ENCODE measurements at regions of chrX and their contacts with region 1.

Region 1: GRCh38 chrX:15749642-15750610 is 11.9 kb downstream of the CA5B start:
- DNase-seq: no peak
- ATAC-seq: peak; percentile 81
- H3K4me3 ChIP-seq: no peak overlapping the region
- H3K27ac ChIP-seq: peak overlapping the region; percentile 57; the same call in 1 of the 2 replicates
- H3K4me1 ChIP-seq: peaks cover 5% of the 10 kb centered on the region
- H3K27me3 ChIP-seq: no peaks in the 10 kb centered on the region
- CTCF ChIP-seq: no peak
- EP300 ChIP-seq: no peak
- POLR2A ChIP-seq: 0 out of 2 replicates have a peak, but pooled peaks have one; percentile 39
- RAD21 ChIP-seq: no peak

Region 2: DNA sequence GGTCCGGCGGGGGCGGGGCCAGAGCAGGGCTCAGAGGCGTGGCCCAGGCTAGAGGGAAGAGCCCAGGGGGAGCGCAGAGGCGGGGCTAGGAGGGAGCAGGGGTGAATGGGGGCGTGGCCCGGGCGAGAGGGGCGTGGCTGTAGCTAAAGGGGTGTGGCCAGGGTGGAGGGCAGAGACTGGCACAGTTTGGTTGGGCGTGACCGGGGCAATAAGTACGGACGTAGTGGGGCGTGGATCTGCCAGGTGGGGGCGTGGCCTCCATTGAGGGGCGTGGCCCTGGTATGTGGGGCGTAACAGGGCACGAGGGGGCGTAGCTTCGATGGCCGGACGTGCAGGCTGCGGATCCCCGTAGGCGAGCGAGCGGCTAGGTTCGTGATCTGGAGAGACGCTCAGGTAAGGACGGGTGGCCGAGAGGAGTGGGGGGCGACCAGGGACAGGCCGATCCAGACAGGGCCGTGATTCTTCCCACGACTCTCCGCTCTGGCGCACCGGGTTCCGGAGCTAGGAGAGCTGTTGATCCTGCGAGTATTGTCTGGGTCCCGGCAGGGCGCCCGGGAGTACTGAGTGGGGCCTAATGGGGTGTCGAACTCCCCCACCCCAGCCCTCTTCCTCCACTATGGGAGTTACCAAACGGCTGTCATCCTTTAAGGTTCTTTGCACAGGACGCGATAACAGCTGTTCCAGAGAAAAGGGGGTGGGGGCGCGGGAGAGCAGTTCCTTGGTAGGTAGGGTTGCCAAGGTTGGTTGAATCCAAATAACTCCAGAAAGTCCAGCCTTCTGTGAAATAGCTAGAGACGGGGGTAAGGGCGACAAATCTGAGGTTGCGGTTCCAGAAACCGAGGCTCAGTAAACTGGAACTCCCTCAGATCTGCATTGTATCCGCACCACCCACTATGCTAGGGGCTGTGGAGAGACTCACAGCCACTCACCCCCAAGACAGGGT is 11.7 kb before region 1 on chrX and contains the start of gene CA5B:
- CTCF ChIA-PET with region 1: interaction called, 20 read pairs
- POLR2A ChIA-PET with region 1: no interaction called
- RAD21 ChIA-PET with region 1: no interaction called
- SMC1A ChIA-PET with region 1: interaction called, 10 read pairs
- in situ Hi-C with region 1: no loop called
- intact Hi-C with region 1: no loop called
- DNase-seq: peak; percentile 87
- ATAC-seq: peak; percentile 98
- H3K4me3 ChIP-seq: peak within 1 kb of the TSS; percentile 64
- H3K27ac ChIP-seq: no peak within 1 kb of the TSS
- H3K4me1 ChIP-seq: no peaks in the 10 kb centered on the region
- H3K27me3 ChIP-seq: no peaks in the 10 kb centered on the region
- CTCF ChIP-seq: no peak
- EP300 ChIP-seq: no peak
- POLR2A ChIP-seq: no peak
- RAD21 ChIP-seq: no peak
- polyA plus RNA-seq, gene CA5B: 1.2 to 2.5 TPM